MCF 10A (cell line): ENCODE measurements at regions of chr18 and their contacts with region 1.

Region 1: DNA sequence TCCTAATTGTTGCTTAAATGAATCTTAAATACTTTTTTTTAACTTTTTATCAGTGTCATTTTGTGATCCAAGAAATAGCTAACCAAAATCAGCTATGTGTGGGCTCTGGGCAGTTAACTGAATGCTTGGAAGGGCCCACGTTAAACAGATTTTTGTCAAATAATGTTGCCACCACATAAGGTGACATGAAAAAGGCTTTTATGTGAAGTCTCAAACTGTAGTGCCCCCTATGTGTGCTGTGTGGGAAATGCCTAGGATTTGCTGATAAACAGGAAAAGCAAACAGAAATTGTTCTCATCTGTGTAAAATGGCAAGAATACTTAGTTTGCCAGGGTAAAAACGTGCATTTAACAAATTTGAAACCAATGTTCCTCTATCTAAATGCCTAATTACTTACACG is 242.2 kb downstream of the ZNF516 start:
- DNase-seq: peak; percentile 36
- H3K4me3 Mint-ChIP-seq: no peak overlapping the region
- H3K27ac Mint-ChIP-seq: no peak overlapping the region
- H3K4me1 Mint-ChIP-seq: no peaks in the 10 kb centered on the region
- H3K27me3 Mint-ChIP-seq: no peaks in the 10 kb centered on the region
- CTCF ChIP-seq: peak; percentile 63

Region 2: DNA sequence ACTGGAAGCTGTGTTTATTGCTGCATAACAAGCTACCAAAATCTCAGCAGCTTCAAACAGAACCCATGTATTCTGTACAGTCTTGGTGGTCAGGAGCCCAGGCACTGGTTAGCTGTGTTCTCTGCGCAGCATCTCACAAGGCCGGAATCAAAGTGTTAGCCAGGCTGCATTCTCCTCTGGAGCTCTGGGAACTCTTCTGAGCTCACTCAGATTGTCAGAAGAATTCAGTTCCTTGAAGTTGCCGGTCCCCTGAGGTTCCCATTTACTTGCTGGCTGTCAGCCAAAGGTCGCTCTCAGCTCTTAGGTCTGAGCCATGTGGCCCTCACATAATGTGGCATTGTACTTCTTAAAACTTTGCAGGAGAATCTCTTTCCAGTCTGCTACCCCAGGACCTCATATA is 701.8 kb before region 1 on chr18:
- CTCF ChIA-PET with region 1: interaction called, 3 read pairs
- POLR2A ChIA-PET with region 1: no interaction called
- intact Hi-C with region 1: loop called (anchors 10 kb)
- DNase-seq: no peak
- H3K4me3 Mint-ChIP-seq: no peak overlapping the region
- H3K27ac Mint-ChIP-seq: no peak overlapping the region
- H3K4me1 Mint-ChIP-seq: no peaks in the 10 kb centered on the region
- H3K27me3 Mint-ChIP-seq: no peaks in the 10 kb centered on the region
- CTCF ChIP-seq: no peak

Region 3: DNA sequence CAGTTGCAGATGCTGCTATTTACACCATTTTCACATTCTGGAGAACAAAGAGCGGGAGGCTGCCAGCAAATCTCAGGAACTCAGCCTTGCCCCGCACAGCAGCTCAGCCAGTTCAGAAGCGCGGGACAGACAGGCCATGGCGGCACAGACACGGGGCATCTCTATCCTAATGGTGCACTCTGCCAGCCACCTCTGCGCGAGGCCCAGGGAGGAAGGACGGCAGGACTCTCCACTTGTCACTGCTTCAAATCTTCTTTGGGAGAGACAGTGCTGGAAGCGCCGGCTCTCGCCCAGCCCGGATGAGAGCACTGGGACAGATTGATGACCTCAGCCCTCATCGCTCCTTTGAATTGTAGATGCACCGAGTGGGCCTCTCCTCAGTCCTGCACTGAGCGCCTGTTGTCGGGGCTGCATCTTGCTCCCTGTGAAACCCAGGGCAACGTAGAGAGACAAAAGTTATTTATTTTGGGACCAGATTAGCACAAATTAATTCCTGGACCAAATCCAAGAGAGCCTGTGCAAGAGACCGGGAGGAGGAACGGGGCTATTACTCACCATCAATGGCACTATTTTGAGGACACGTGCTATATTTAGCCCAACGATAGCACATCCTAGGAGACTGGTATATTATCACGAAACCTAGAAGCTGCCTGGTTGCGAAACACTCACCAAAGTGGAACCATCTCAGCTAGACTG is 614.0 kb before region 1 on chr18:
- CTCF ChIA-PET with region 1: no interaction called
- POLR2A ChIA-PET with region 1: no interaction called
- intact Hi-C with region 1: loop called (anchors 10 kb)
- DNase-seq: peak; percentile 43
- H3K4me3 Mint-ChIP-seq: no peak overlapping the region
- H3K27ac Mint-ChIP-seq: no peak overlapping the region
- H3K4me1 Mint-ChIP-seq: peaks cover 19% of the 10 kb centered on the region
- H3K27me3 Mint-ChIP-seq: no peaks in the 10 kb centered on the region
- CTCF ChIP-seq: no peak

Region 4: DNA sequence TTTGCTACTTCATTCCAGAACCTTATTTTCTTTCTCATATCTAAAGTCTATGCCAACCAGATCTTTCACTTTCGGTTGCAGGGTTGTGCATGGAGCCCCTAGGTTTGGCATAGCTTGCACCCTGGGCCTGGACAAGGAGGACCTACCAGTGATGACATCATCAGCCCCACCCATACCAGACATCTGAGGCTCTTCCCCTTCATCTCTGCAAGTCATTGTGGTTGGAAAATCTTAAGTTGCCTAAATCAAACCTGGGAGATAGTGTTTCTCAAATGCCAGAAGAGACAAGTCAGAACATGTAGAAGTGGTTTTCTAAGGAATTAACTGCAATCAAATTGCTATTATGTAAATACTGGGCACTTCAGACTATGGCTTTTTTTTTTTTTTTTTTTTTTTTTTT is 121.1 kb before region 1 on chr18:
- CTCF ChIA-PET with region 1: interaction called, 3 read pairs
- POLR2A ChIA-PET with region 1: no interaction called
- intact Hi-C with region 1: loop called (anchors 10 kb)
- DNase-seq: peak; percentile 98
- H3K4me3 Mint-ChIP-seq: peak overlapping the region; percentile 58
- H3K27ac Mint-ChIP-seq: peak overlapping the region; percentile 90
- H3K4me1 Mint-ChIP-seq: peaks cover 11% of the 10 kb centered on the region
- H3K27me3 Mint-ChIP-seq: no peaks in the 10 kb centered on the region
- CTCF ChIP-seq: no peak